ENCODE measurements at regions of chr11 and their contacts with region 1.

Region 1: DNA sequence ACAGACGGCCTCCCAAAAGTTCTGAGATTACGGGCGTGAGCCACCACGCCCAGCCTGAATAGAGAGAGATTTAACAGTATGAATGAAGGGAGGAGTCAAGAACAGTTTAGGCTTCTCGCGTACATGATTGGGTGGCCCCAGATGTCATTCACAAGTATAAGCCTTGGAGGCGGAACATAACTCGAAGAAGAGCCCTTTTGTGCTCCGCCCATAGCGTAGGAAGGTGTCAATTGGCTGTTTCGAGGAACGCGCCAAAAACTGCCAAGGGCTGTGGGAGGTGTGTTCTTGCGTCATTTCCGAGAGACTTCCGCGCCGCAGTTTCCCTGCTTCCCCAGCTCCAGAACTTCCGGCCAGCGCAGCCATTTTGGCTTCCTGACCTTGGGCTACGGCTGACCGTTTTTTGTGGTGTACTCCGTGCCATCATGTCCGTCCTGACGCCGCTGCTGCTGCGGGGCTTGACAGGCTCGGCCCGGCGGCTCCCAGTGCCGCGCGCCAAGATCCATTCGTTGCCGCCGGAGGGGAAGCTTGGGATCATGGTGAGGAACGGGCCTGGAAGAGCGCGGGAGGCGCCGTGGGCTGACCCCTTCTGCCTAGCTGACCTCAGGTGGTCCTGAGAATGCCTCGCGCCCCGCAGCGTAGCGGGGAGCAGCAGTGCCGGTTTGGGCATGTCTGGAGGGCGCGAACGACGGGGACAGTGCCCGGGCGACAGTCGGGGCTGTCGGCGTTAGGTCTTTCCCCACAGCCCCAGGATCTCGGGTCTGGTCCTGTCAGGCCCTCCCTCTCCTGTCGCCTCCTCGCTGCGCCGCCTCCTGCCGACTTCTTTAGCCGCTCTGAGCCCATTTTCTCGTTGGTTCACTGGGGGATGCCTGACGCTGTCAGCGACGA is at the start of gene COX8A:
- DNase-seq: peak; percentile 76 to 98 (median 96)
- ATAC-seq: peak; percentile 98 to 99
- H3K4me3 Mint-ChIP-seq: peak within 1 kb of the TSS; percentile 98 to 100 (median 99)
- H3K27ac Mint-ChIP-seq: peak within 1 kb of the TSS; percentile 94 to 100 (median 99)
- H3K4me1 Mint-ChIP-seq: peaks cover 17 to 37% (median 28%) of the 10 kb centered on the region in 4 donors
- H3K27me3 Mint-ChIP-seq: peaks cover 0 to 2% (median 0%) of the 10 kb centered on the region in 5 donors
- polyA plus RNA-seq, gene COX8A: 319 to 428 (median 392) TPM

Region 2: DNA sequence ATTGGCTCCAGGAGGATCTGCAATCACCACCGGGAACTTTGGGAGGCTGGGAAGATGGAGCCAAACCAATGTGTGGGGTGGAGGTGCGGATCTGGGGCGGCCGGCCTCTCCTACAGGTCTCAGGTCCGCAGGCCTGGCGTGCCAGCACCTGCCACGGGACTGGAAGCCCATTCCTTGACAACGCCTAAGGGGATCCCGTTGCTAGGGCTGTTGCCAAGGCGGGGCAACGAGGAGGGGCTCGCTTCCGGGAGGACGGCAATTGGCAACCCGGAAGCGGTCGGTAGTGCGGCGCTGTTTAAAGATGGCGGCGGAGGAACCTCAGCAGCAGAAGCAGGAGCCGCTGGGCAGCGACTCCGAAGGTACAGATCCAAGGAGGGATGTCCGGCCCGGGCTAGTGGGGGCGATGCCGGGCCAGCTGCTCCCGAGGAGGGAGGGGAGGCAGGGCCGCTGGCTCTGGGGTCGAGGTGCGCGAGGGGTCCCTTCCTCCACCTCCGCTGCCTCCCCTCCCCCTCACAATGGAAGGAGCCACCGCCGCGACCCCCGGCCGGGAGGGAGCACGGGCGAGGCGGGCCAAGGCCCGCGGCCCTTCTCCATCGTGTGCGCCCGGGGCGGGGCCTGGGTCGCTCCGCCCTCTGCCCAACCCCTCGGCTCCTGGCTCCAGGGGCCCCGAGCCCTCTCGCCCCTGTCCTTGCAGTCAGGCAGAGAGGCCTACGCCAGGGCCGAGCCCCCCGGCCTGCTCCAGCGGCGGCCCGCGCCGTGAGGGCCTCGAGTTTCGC is 11.8 kb after region 1 on chr11 and contains the start of gene OTUB1:
- POLR2A ChIA-PET with region 1: interaction called, 15 read pairs
- DNase-seq: peak; percentile 75 to 93 (median 84)
- ATAC-seq: peak; percentile 86 to 92
- H3K4me3 Mint-ChIP-seq: peak within 1 kb of the TSS; percentile 95 to 99 (median 98)
- H3K27ac Mint-ChIP-seq: peak within 1 kb of the TSS; percentile 94 to 99 (median 99)
- H3K4me1 Mint-ChIP-seq: peaks cover 19 to 41% (median 34%) of the 10 kb centered on the region in 4 donors
- H3K27me3 Mint-ChIP-seq: no peaks in the 10 kb centered on the region
- polyA plus RNA-seq, gene OTUB1: 109 to 121 (median 115) TPM

Region 3: GRCh38 chr11:64036087-64037026 is 61.9 kb after region 1 on chr11:
- POLR2A ChIA-PET with region 1: no interaction called
- DNase-seq: no peak
- ATAC-seq: peak; percentile 39 to 56
- H3K4me3 Mint-ChIP-seq: peak overlapping the region in 1 of 10 donors; percentile 56
- H3K27ac Mint-ChIP-seq: no peak overlapping the region
- H3K4me1 Mint-ChIP-seq: peaks cover 7 to 11% (median 8%) of the 10 kb centered on the region in 4 donors
- H3K27me3 Mint-ChIP-seq: peaks cover 19 to 56% (median 32%) of the 10 kb centered on the region in 5 donors